HEK293 (cell line): ENCODE measurements at regions of chr12 and their contacts with region 1.

Region 1: GRCh38 chr12:31536672-31537071 is 54.3 kb downstream of the DENND5B start:
- H3K4me3 ChIP-seq: no peak overlapping the region
- H3K27ac ChIP-seq: no peak overlapping the region
- H3K4me1 ChIP-seq: peaks cover 7% of the 10 kb centered on the region; the same call in 1 of the 2 replicates
- CTCF ChIP-seq: no peak

Region 2: DNA sequence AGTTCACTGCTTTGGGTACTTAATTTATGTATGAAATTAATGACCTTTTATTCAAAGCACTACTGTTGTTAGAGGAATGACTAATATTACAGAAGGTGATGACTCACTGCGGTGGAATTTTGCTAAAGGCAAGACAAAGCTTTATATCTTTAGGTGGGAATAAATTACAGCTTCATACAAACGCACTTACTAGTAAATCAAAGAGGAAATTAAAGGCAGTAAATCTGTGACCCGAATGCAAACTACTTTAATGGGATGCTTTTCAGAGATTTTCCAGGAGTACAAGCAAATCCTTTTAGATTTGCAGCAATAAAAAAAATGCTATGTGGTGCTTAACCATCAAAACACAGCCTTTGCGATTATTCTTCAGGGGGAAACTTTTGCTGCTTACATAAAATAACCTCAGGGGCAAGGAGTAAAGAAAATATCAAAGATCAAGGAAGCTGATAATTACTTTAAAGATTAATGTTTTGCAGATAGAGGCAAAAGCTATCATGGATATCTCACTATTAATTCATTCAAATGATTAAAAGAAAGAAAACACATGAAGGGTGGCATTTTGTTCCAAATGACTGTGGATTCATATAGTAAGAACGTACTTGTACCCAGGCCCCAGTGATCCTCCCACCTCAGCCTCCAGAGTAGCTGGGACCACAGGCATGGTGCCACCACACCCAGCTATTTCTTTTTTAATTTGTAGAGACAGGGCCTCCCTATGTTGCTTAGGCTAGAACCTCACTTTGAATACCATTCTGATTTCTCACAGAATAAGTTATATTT is 44.7 kb before region 1 on chr12:
- CTCF ChIA-PET with region 1: no interaction called
- POLR2A ChIA-PET with region 1: interaction called, 11 read pairs
- H3K4me3 ChIP-seq: no peak overlapping the region
- H3K27ac ChIP-seq: 0 out of 2 replicates have a peak overlapping the region, but pooled peaks have one; percentile 13
- H3K4me1 ChIP-seq: peaks cover 27% of the 10 kb centered on the region
- CTCF ChIP-seq: no peak

Region 3: GRCh38 chr12:31506515-31507306 is 30.0 kb before region 1 on chr12:
- CTCF ChIA-PET with region 1: no interaction called
- POLR2A ChIA-PET with region 1: no interaction called
- H3K4me3 ChIP-seq: no peak overlapping the region
- H3K27ac ChIP-seq: no peak overlapping the region
- H3K4me1 ChIP-seq: no peaks in the 10 kb centered on the region; the same call in 1 of the 2 replicates
- CTCF ChIP-seq: no peak